ENCODE measurements at regions of chr1 and their contacts with region 1.

Region 1: DNA sequence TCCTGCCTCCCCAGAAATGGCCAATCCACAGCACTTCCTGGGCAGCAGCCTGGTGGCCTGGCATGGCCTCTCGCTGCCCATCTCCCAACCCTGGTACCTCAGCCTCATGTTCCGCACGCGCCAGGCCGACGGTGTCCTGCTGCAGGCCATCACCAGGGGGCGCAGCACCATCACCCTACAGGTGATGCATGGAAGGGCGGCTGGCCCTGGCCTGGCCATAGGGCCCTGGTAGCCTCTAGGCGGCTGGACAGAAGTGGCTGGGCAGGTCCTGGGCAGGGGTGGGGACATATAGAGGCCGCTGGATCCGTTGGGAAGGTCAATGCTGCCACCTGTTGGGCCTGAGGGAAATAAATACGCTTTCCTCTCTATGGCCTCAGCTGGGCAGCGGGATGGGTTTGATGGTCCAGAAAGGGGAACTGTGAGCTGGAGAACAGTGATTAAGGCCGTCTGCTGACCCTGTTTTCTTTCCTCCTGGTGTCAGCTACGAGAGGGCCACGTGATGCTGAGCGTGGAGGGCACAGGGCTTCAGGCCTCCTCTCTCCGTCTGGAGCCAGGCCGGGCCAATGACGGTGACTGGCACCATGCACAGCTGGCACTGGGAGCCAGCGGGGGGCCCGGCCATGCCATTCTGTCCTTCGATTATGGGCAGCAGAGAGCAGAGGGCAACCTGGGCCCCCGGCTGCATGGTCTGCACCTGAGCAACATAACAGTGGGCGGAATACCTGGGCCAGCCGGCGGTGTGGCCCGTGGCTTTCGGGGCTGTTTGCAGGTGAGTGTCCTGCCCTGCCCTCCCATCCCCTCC is 14.5 kb downstream of the CELSR2 start:
- DNase-seq: peak; percentile 92 to 94
- H3K4me3 ChIP-seq: no peak overlapping the region
- H3K4me3 Mint-ChIP-seq: no peak overlapping the region
- H3K27ac Mint-ChIP-seq: no peak overlapping the region
- H3K4me1 ChIP-seq: no peaks in the 10 kb centered on the region
- H3K4me1 Mint-ChIP-seq: no peaks in the 10 kb centered on the region
- H3K27me3 ChIP-seq: no peaks in the 10 kb centered on the region
- H3K27me3 Mint-ChIP-seq: no peaks in the 10 kb centered on the region
- CTCF ChIP-seq: peak; percentile 96 to 97

Region 2: GRCh38 chr1:109099938-109100773 is 163.6 kb before region 1 on chr1:
- CTCF ChIA-PET with region 1: no interaction called
- POLR2A ChIA-PET with region 1: no interaction called
- intact Hi-C with region 1: loop called (anchors 10 kb)
- DNase-seq: peak; percentile 94 to 96
- H3K4me3 ChIP-seq: peak overlapping the region; percentile 84
- H3K4me3 Mint-ChIP-seq: peak overlapping the region; percentile 92
- H3K27ac Mint-ChIP-seq: peak overlapping the region; percentile 98
- H3K4me1 ChIP-seq: 0 out of 2 replicates have a peak, but pooled peaks cover 3% of the 10 kb centered on the region
- H3K4me1 Mint-ChIP-seq: no peaks in the 10 kb centered on the region
- H3K27me3 ChIP-seq: no peaks in the 10 kb centered on the region
- H3K27me3 Mint-ChIP-seq: no peaks in the 10 kb centered on the region
- CTCF ChIP-seq: peak; percentile 52 to 72

Region 3: DNA sequence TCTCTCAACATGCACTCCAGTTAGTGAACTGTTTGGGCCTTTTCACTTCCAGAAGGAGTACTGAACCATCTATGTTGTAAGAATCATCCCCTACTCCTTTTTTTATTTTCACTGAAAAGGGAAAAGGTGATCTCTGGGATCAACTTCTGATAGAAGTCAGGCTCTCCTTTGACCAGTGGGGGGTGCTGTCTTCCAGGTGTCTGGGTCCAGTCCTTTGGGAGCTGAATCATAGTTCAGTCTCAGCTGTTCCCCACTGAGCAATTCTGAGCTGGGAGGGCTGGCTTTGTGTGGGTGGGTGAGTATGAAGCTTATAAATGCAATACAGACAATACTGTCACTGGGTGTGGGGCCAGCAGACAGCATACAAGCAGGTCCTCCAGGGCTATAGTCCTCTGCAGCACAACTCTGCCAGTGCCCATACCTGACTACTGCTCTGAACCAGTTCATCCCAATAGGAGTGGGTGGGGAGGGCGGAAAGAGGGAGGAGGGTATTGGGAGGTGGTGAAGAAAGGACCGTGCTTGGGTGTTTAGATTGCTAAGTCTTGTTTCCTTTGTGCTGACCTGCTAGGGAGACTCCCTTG is 62.6 kb before region 1 on chr1:
- CTCF ChIA-PET with region 1: no interaction called
- POLR2A ChIA-PET with region 1: no interaction called
- intact Hi-C with region 1: loop called (anchors 1 kb)
- DNase-seq: peak in 1 of 2 experiments; percentile 44
- H3K4me3 ChIP-seq: no peak overlapping the region
- H3K4me3 Mint-ChIP-seq: no peak overlapping the region
- H3K27ac Mint-ChIP-seq: no peak overlapping the region
- H3K4me1 ChIP-seq: peaks cover 8% of the 10 kb centered on the region; the same call in 1 of the 2 replicates
- H3K4me1 Mint-ChIP-seq: peaks cover 8% of the 10 kb centered on the region
- H3K27me3 ChIP-seq: no peaks in the 10 kb centered on the region
- H3K27me3 Mint-ChIP-seq: no peaks in the 10 kb centered on the region
- CTCF ChIP-seq: peak in 1 of 2 experiments; percentile 57

Region 4: DNA sequence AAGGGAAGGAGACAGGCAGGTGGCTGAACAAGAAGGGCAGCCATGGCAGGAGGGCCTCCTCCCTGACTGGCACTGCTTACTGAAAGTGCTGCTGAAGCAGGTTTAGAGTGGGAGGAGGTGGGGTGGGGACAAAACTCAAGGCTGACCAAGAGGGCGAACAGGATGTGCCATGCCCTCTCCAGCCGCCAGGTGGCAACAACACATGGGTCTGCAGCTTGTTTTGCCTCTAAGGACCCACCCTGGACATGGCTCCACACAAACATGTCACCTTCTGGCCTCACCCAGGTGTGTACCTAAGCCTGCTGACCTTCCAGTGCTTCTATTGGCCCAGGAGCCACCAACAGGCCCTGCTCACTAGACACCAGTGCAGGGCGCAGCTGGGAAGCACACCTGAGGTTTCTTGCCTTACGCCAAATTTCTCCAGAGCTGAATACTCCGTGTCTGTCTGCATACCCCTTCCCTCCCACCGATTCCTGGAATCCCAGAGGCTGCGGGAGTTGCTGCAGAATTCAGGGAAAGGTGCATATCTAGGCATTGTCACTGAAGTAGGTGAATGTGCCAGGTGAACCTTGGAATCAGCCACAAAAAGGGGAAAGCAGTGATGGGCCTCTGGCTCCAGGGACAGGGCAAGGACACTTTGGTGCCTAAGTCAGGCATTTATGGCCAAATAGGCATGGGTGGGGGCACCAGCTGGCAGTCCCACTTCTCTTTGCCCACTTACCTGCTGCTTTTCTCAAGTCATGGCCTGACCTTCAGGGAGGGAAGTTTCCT is 13.8 kb after region 1 on chr1:
- CTCF ChIA-PET with region 1: no interaction called
- POLR2A ChIA-PET with region 1: no interaction called
- intact Hi-C with region 1: loop called (anchors 1 kb)
- DNase-seq: peak; percentile 83 to 84
- H3K4me3 ChIP-seq: no peak overlapping the region
- H3K4me3 Mint-ChIP-seq: no peak overlapping the region
- H3K27ac Mint-ChIP-seq: peak overlapping the region; percentile 5
- H3K4me1 ChIP-seq: peaks cover 41% of the 10 kb centered on the region
- H3K4me1 Mint-ChIP-seq: peaks cover 15% of the 10 kb centered on the region
- H3K27me3 ChIP-seq: no peaks in the 10 kb centered on the region
- H3K27me3 Mint-ChIP-seq: no peaks in the 10 kb centered on the region
- CTCF ChIP-seq: peak; percentile 72 to 74

Region 5: GRCh38 chr1:109532365-109533136 is 268.8 kb after region 1 on chr1:
- CTCF ChIA-PET with region 1: no interaction called
- POLR2A ChIA-PET with region 1: no interaction called
- intact Hi-C with region 1: loop called (anchors 5 kb)
- DNase-seq: peak; percentile 77 to 83
- H3K4me3 ChIP-seq: no peak overlapping the region
- H3K4me3 Mint-ChIP-seq: no peak overlapping the region
- H3K27ac Mint-ChIP-seq: no peak overlapping the region
- H3K4me1 ChIP-seq: no peaks in the 10 kb centered on the region; the same call in 1 of the 2 replicates
- H3K4me1 Mint-ChIP-seq: no peaks in the 10 kb centered on the region
- H3K27me3 ChIP-seq: no peaks in the 10 kb centered on the region
- H3K27me3 Mint-ChIP-seq: no peaks in the 10 kb centered on the region
- CTCF ChIP-seq: peak; percentile 74 to 80